Activated T-helper 2 cell treated with anti-CD3 and anti-CD28 coated beads, Interferon-gamma antibody, Interleukin-2, Interleukin-4, amounts not matched to agents 10 μg/mL and 5 μg/mL and 100 μg/mL, durations not matched to agents 14 hours and 24 hours and 36 hours (primary cell): ENCODE measurements at regions of chr10 and their contacts with region 1.

Region 1: DNA sequence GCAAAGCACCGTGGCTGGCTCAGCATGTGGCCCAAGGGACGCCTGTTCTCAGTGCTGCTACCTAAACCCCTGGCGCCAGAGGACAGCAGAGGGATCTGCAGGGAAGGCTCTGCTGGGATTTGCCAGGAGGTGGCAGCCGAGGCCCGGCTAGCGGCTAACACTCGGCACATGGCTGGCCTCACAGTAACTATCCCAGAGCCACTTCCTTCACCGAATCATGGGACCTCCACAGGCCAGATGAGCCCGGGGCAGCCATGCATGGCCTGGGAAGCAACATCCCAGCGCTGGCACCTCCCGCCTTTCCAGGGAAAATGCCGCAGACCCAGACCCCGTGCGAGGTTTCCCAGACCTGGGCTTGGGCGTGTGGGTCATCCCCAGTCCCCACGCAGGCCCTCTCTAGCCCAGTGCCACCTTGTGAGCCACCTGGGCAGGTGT is 36.4 kb downstream of the DPYSL4 start:
- DNase-seq: peak; percentile 58
- H3K4me3 Mint-ChIP-seq: no peak overlapping the region
- H3K27ac Mint-ChIP-seq: no peak overlapping the region
- H3K4me1 Mint-ChIP-seq: no peaks in the 10 kb centered on the region
- H3K27me3 Mint-ChIP-seq: no peaks in the 10 kb centered on the region

Region 2: DNA sequence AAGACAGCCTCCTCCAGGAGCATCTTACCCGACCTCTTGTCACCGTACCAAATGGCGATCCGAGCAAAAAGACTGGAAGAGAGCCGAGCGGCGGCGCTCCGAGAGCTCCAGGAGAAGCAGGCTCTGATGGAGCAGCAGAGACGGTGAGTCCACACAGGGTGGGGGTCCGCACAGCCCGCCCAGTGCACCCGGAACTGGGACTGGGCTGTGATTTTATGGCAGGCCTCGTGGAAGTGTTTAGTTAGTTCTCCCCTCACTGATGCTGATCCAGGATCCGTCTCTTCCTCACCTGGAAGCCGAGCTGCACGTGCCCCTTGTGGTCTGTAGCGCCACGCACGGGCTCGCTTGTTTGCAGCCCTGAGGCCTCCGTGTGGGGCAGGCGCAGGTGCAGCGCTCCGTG is 128.4 kb after region 1 on chr10:
- intact Hi-C with region 1: loop called (anchors 1 kb)
- DNase-seq: no peak
- H3K4me3 Mint-ChIP-seq: no peak overlapping the region
- H3K27ac Mint-ChIP-seq: no peak overlapping the region
- H3K4me1 Mint-ChIP-seq: no peaks in the 10 kb centered on the region
- H3K27me3 Mint-ChIP-seq: no peaks in the 10 kb centered on the region

Region 3: GRCh38 chr10:132452631-132453469 is 229.7 kb after region 1 on chr10:
- intact Hi-C with region 1: loop called (anchors 1 kb)
- DNase-seq: peak; percentile 79
- H3K4me3 Mint-ChIP-seq: peak overlapping the region; percentile 37
- H3K27ac Mint-ChIP-seq: no peak overlapping the region
- H3K4me1 Mint-ChIP-seq: peaks cover 2% of the 10 kb centered on the region
- H3K27me3 Mint-ChIP-seq: no peaks in the 10 kb centered on the region